ENCODE measurements at regions of chr17 and their contacts with region 1.

Region 1: DNA sequence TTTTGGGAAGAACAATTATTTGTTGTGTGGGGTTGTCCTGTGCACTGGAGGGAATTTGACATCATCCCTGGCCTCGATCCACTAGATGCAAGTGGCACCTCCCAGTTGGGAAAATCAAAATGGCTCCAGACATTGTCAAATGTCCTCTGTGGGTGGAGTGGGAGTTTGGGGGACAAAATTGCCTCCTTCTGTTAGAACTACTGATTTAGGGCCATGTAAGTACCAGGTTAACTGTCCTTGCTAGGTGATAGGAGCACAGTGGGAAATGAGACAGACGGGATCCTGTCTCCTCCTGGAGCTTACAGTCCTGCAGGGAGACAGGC is 56.8 kb downstream of the ARHGAP23 start:
- DNase-seq: no peak
- ATAC-seq: no peak
- H3K4me3 ChIP-seq: no peak overlapping the region
- H3K27ac ChIP-seq: no peak overlapping the region
- H3K4me1 ChIP-seq: peaks cover 4% of the 10 kb centered on the region; the same call in 1 of the 2 replicates
- H3K27me3 ChIP-seq: peaks cover 6 to 35% of the 10 kb centered on the region in 2 experiments; a peak in 4 of 5 replicates
- CTCF ChIP-seq: no peak
- EP300 ChIP-seq: no peak
- POLR2A ChIP-seq: no peak
- RAD21 ChIP-seq: no peak

Region 2: DNA sequence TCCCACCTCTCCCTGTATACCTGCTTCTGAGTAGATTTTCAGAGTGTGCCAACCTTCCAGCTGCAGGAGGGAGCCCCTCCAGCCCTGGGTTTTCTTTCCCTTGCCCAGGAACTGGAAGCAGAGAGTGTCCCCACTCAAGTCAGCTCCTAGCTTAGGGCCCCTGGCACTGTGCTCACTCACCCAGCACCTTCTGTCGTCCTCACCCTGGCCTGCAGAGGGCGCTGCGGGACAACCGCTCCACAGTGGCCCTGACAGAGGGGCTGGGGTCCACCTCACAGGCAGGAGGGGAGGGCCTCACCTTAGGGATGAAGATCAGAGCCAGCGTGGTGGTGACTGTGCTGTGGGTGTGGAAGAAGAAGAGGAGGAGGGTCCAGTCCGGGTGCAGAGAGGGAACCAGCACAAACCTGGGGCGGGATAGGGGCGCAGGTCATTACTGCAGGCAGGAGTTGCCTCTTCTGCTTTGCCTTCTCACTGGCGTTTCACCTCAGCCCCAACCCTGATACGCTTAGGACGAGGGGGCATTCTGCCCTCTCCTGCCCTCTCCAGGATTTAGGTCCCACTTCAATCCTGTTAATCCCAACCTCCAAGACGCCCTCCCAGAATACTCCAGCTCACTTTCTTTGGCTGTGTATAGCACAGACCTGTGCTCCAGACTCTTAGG is 151.3 kb before region 1 on chr17:
- CTCF ChIA-PET with region 1: no interaction called
- POLR2A ChIA-PET with region 1: no interaction called
- in situ Hi-C with region 1: loop called (anchors 5 kb)
- intact Hi-C with region 1: no loop called
- DNase-seq: peak; percentile 53
- ATAC-seq: peak; percentile 75
- H3K4me3 ChIP-seq: no peak overlapping the region
- H3K27ac ChIP-seq: no peak overlapping the region
- H3K4me1 ChIP-seq: no peaks in the 10 kb centered on the region
- H3K27me3 ChIP-seq: peaks cover 34 to 91% of the 10 kb centered on the region in 2 experiments
- CTCF ChIP-seq: peak; percentile 95
- EP300 ChIP-seq: no peak
- POLR2A ChIP-seq: no peak
- RAD21 ChIP-seq: peak; percentile 68

Region 3: DNA sequence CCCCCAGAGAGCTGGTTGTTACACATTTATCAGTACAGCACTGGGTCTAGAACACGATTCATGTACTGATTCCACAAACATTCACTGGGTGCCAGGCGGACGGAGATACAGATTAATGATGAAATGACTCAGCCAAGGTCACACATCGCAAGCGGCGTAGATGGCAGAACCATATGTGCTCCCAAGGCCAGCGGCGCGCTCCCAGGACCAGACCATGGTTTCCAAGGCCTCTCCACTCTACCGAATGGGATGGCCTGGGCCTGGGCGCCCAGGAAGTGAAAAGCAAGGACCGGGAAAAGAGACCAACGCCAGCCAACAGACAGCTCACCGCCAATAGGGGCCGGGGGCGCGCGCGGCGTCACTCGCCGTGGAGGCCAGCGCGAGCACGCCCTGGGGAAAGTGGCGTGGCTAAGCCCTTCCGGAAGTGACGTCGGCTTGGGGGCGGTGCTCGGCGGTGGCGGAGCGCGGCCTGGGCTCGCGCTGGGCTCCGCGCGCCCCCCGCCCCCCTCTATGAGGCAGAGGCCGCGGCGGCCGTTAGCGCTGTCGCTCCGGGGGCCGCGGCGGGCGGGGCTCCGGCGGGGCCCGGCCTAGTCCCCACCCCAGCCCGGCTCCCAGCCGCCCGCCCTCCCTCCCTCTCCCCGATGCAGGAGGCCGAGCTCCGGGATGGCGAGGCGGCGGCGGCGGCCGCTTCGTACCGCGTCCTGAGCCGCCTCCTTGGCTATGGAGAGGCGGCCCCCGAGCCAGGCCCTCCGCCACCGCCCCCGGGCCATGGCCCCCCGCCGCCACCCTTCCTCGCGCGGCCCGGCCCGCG is 133.5 kb before region 1 on chr17 and contains the start of gene SOCS7:
- CTCF ChIA-PET with region 1: interaction called, 4 read pairs
- POLR2A ChIA-PET with region 1: no interaction called
- in situ Hi-C with region 1: no loop called
- intact Hi-C with region 1: loop called (anchors 5 kb)
- DNase-seq: peak; percentile 95
- ATAC-seq: peak; percentile 89
- H3K4me3 ChIP-seq: peak within 1 kb of the TSS; percentile 91 to 95 (median 94)
- H3K27ac ChIP-seq: peak within 1 kb of the TSS; percentile 73
- H3K4me1 ChIP-seq: peaks cover 63% of the 10 kb centered on the region
- H3K27me3 ChIP-seq: no peaks in the 10 kb centered on the region; a peak in 1 of 5 replicates
- CTCF ChIP-seq: peak; percentile 39
- EP300 ChIP-seq: peak in 1 of 2 experiments; percentile 45; a peak in 2 of 4 replicates
- POLR2A ChIP-seq: peak; percentile 96 to 97
- RAD21 ChIP-seq: peak; percentile 67
- total RNA-seq, gene SOCS7: 24.0 and 24.2 TPM in 2 replicates

Region 4: GRCh38 chr17:38421171-38421841 is 63.8 kb before region 1 on chr17:
- CTCF ChIA-PET with region 1: interaction called, 9 read pairs
- POLR2A ChIA-PET with region 1: no interaction called
- in situ Hi-C with region 1: no loop called
- intact Hi-C with region 1: loop called (anchors 2 kb)
- DNase-seq: no peak
- ATAC-seq: no peak
- H3K4me3 ChIP-seq: no peak overlapping the region
- H3K27ac ChIP-seq: no peak overlapping the region
- H3K4me1 ChIP-seq: peaks cover 19% of the 10 kb centered on the region
- H3K27me3 ChIP-seq: peaks cover 24 to 85% of the 10 kb centered on the region in 2 experiments
- CTCF ChIP-seq: no peak
- EP300 ChIP-seq: no peak
- POLR2A ChIP-seq: no peak
- RAD21 ChIP-seq: no peak

Region 5: GRCh38 chr17:38444151-38444550 is 41.0 kb before region 1 on chr17:
- CTCF ChIA-PET with region 1: interaction called, 21 read pairs
- POLR2A ChIA-PET with region 1: no interaction called
- in situ Hi-C with region 1: no loop called
- intact Hi-C with region 1: loop called (anchors 2 kb)
- DNase-seq: peak; percentile 57
- ATAC-seq: peak; percentile 95
- H3K4me3 ChIP-seq: no peak overlapping the region
- H3K27ac ChIP-seq: no peak overlapping the region
- H3K4me1 ChIP-seq: peaks cover 4% of the 10 kb centered on the region
- H3K27me3 ChIP-seq: peaks cover 7 to 63% of the 10 kb centered on the region in 2 experiments; a peak in 4 of 5 replicates
- CTCF ChIP-seq: peak; percentile 98
- EP300 ChIP-seq: no peak
- POLR2A ChIP-seq: no peak
- RAD21 ChIP-seq: peak; percentile 96

Measured in HepG2 (cell line).